ENCODE measurements at regions of chr12 and their contacts with region 1.

Region 1: DNA sequence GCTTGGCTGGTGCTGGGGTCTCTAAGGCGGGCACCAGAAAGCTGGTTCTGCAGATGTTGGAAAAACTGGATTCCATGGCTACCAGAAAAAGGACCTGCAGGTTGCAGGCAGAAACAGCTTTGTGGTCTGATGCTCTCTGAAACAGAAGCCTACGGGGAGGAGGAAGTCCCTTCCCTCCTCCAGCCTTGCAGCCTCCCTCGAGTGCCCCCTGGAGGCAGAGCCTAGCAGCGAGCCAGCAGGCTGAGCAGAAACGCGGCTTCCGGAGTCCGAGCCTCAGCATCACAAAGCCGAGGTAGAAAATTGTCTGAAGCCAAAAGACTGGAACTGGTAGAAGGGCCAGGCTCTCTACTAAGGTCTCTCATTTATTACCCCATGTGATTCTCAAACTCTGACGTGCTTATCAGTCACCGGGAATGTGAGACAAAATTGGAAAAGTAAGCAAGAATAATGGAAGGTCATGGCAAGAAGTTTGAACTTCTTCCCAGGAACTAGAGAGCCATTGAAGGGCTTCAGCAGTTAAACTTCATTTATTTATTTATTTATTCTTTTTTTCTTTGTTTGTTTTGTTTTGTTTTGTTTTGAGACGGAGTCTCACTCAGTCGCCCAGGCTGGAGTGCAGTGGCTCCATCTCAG is 82.2 kb upstream of the CPSF6 start:
- DNase-seq: peak; percentile 79 to 93 (median 87)
- ATAC-seq: peak; percentile 83
- H3K4me3 ChIP-seq: peak overlapping the region; percentile 17
- H3K4me3 Mint-ChIP-seq: peak overlapping the region; percentile 35
- H3K27ac ChIP-seq: no peak overlapping the region
- H3K27ac Mint-ChIP-seq: peak overlapping the region; percentile 57
- H3K4me1 ChIP-seq: peaks cover 16% of the 10 kb centered on the region
- H3K4me1 Mint-ChIP-seq: peaks cover 31% of the 10 kb centered on the region
- H3K27me3 ChIP-seq: no peaks in the 10 kb centered on the region
- H3K27me3 Mint-ChIP-seq: no peaks in the 10 kb centered on the region
- CTCF ChIP-seq: peak; percentile 87

Region 2: GRCh38 chr12:69239352-69239921 is 82.3 kb after region 1 on chr12 and contains the start of gene CPSF6:
- CTCF ChIA-PET with region 1: interaction called, 10 read pairs
- POLR2A ChIA-PET with region 1: interaction called, 9 read pairs
- intact Hi-C with region 1: no loop called
- DNase-seq: peak; percentile 93 to 99 (median 96)
- ATAC-seq: peak; percentile 85
- H3K4me3 ChIP-seq: peak within 1 kb of the TSS; percentile 87
- H3K4me3 Mint-ChIP-seq: peak within 1 kb of the TSS; percentile 97
- H3K27ac ChIP-seq: peak within 1 kb of the TSS; percentile 85 to 86
- H3K27ac Mint-ChIP-seq: peak within 1 kb of the TSS; percentile 99
- H3K4me1 ChIP-seq: peaks cover 30% of the 10 kb centered on the region
- H3K4me1 Mint-ChIP-seq: peaks cover 59% of the 10 kb centered on the region
- H3K27me3 ChIP-seq: no peaks in the 10 kb centered on the region
- H3K27me3 Mint-ChIP-seq: no peaks in the 10 kb centered on the region
- CTCF ChIP-seq: no peak
- total RNA-seq, gene CPSF6: 80.9 to 86.7 TPM

Region 3: DNA sequence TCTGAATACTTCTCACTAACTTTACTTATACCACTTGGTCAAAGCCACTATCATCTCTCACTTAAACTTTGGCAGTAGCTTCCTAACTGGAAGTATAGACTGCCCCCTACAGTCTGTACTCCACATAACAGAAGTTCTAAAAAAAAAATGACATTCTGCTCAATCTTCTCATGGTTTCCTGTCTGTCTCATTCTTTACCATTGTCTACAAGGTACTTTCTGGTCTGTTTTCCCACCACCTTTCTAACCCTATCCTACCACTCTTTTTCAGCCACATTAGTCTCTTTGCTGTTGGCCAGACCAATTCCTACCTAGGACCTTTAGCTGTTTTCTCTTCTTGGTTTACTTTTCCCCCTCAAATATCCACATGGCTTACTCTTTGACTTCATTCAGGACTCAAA is 96.9 kb after region 1 on chr12:
- CTCF ChIA-PET with region 1: interaction called, 45 read pairs
- POLR2A ChIA-PET with region 1: interaction called, 13 read pairs
- intact Hi-C with region 1: loop called (anchors 1 kb)
- DNase-seq: peak in 3 of 14 experiments; percentile 71 to 84 (median 82)
- ATAC-seq: peak; percentile 91
- H3K4me3 ChIP-seq: no peak overlapping the region
- H3K4me3 Mint-ChIP-seq: no peak overlapping the region
- H3K27ac ChIP-seq: peak overlapping the region in 1 of 2 donors; percentile 8
- H3K27ac Mint-ChIP-seq: peak overlapping the region; percentile 19
- H3K4me1 ChIP-seq: no peaks in the 10 kb centered on the region
- H3K4me1 Mint-ChIP-seq: peaks cover 56% of the 10 kb centered on the region
- H3K27me3 ChIP-seq: no peaks in the 10 kb centered on the region
- H3K27me3 Mint-ChIP-seq: no peaks in the 10 kb centered on the region
- CTCF ChIP-seq: peak; percentile 74

Region 4: GRCh38 chr12:69470189-69471075 is 313.3 kb after region 1 on chr12 and contains the start of gene FRS2:
- CTCF ChIA-PET with region 1: interaction called, 3 read pairs
- POLR2A ChIA-PET with region 1: no interaction called
- intact Hi-C with region 1: loop called in 1 of 2 experiments (anchors 10 kb)
- DNase-seq: peak; percentile 68 to 90 (median 82)
- ATAC-seq: peak; percentile 98
- H3K4me3 ChIP-seq: peak within 1 kb of the TSS; percentile 77
- H3K4me3 Mint-ChIP-seq: peak within 1 kb of the TSS; percentile 100
- H3K27ac ChIP-seq: peak within 1 kb of the TSS; percentile 63 to 72
- H3K27ac Mint-ChIP-seq: peak within 1 kb of the TSS; percentile 92
- H3K4me1 ChIP-seq: peaks cover 12% of the 10 kb centered on the region
- H3K4me1 Mint-ChIP-seq: peaks cover 55% of the 10 kb centered on the region
- H3K27me3 ChIP-seq: no peaks in the 10 kb centered on the region
- H3K27me3 Mint-ChIP-seq: no peaks in the 10 kb centered on the region
- CTCF ChIP-seq: no peak
- total RNA-seq, gene FRS2: 21.7 to 24.9 TPM

Region 5: DNA sequence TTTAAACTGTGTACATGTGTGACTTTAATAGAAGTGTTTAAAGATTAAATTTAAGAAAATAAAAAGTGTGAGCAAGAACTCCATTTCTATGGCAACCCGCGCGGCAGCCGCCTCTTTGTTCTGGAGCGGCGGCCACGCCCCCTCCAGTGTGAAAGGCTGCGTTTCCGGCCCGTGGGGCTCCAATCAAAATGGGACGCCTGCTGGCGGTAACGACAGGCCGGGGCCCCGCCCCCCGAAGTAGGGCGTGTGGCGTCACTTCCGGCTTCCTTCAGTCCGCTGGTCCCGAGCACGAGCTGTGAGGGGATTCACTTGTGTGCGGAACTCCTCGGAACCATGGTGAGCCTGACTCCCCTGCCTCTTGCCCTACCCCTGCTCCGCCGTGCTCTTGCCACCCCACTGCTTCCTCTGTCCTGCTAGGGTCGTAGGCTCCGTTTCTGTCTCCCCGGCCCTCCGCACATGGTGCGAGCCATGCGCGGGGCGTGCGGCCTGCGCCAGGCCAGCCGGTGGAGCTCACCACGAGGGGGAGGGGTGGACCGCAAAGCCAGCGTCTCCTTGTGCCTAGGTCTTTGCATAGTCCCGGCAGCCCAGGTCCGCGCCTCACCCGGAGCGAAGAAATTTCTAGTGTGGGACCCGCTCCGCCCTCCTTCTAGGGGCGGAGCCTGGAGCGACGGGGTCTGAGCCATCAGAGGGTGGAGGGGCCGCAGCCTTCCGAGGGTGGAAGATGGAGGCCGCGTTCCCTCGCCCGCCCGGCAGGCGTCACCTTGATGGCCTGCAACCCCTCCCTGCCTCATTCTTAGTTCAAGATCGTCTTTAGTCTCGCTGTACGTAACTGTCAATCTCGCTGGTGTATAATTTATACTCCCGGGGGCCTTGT is 428.3 kb after region 1 on chr12 and contains the start of gene CCT2:
- CTCF ChIA-PET with region 1: no interaction called
- POLR2A ChIA-PET with region 1: no interaction called
- intact Hi-C with region 1: loop called (anchors 5 kb)
- DNase-seq: peak; percentile 92 to 99 (median 96)
- ATAC-seq: peak; percentile 87
- H3K4me3 ChIP-seq: peak within 1 kb of the TSS; percentile 98
- H3K4me3 Mint-ChIP-seq: peak within 1 kb of the TSS; percentile 99
- H3K27ac ChIP-seq: peak within 1 kb of the TSS; percentile 96 to 97
- H3K27ac Mint-ChIP-seq: peak within 1 kb of the TSS; percentile 98
- H3K4me1 ChIP-seq: peaks cover 12% of the 10 kb centered on the region
- H3K4me1 Mint-ChIP-seq: peaks cover 27% of the 10 kb centered on the region
- H3K27me3 ChIP-seq: no peaks in the 10 kb centered on the region
- H3K27me3 Mint-ChIP-seq: no peaks in the 10 kb centered on the region
- CTCF ChIP-seq: peak; percentile 28
- total RNA-seq, gene CCT2: 173 to 177 TPM

Region 6: DNA sequence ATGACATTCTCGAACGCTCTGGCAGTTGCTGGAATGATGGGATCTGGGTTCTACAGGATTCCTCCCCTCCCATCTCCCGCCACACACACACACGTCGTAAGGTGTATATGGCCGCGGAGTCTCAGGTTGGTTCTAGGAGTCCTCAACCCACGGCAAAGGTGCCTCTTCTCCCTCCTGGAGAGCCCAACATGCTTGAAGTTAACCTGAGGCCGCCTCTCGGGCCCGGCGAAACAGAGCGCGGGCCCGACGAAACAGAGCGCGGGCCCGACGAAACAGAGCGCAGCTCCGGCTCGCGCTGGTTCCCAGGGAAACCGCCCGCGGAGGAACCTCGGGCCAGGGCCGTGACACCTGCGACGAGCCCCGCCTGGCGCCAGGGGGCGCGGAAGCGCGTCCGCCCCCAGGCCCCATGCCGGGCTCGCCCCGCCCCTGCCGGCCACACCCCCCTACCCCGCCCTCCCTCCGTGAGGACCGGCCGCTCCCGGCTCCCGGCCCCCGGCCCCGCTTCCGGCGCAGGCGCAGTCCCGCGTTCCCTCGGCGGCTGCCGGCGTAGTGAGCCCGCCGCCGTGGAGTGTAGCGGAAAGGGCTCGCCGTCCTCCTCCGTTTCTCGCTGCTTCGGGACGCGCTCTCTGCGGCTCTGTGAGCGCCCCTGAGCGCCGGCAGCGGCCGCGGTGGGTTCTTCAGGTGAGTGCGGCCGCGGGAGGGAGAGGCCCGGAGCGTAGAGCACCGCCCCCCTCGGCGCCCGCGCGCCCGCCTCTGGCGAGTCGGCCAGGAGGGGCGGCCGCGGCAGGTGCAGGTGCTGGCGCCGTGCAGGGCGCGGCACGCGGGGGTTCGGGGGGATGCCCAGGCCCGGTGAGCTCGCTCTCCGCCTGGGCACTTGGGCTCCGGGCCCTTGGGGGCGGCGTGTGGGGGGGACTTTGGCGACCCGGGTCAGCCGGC is 581.5 kb after region 1 on chr12 and contains the start of gene RAB3IP:
- CTCF ChIA-PET with region 1: no interaction called
- POLR2A ChIA-PET with region 1: no interaction called
- intact Hi-C with region 1: loop called in 1 of 2 experiments (anchors 5 kb)
- DNase-seq: peak; percentile 84 to 98 (median 92)
- ATAC-seq: peak; percentile 84
- H3K4me3 ChIP-seq: peak within 1 kb of the TSS; percentile 82
- H3K4me3 Mint-ChIP-seq: peak within 1 kb of the TSS; percentile 86
- H3K27ac ChIP-seq: peak within 1 kb of the TSS; percentile 48 to 68
- H3K27ac Mint-ChIP-seq: peak within 1 kb of the TSS; percentile 80
- H3K4me1 ChIP-seq: peaks cover 11% of the 10 kb centered on the region
- H3K4me1 Mint-ChIP-seq: peaks cover 27% of the 10 kb centered on the region
- H3K27me3 ChIP-seq: no peaks in the 10 kb centered on the region
- H3K27me3 Mint-ChIP-seq: peaks cover 6% of the 10 kb centered on the region
- CTCF ChIP-seq: peak; percentile 75
- total RNA-seq, gene RAB3IP: 15.2 to 19.6 TPM

Region 7: GRCh38 chr12:70243510-70244371 is 1086.6 kb after region 1 on chr12:
- CTCF ChIA-PET with region 1: no interaction called
- POLR2A ChIA-PET with region 1: no interaction called
- intact Hi-C with region 1: no loop called
- DNase-seq: peak; percentile 54 to 89 (median 68)
- ATAC-seq: peak; percentile 58
- H3K4me3 ChIP-seq: peak overlapping the region; percentile 88
- H3K4me3 Mint-ChIP-seq: peak overlapping the region; percentile 99
- H3K27ac ChIP-seq: peak overlapping the region; percentile 96 to 98
- H3K27ac Mint-ChIP-seq: peak overlapping the region; percentile 97
- H3K4me1 ChIP-seq: peaks cover 12% of the 10 kb centered on the region
- H3K4me1 Mint-ChIP-seq: peaks cover 84% of the 10 kb centered on the region
- H3K27me3 ChIP-seq: no peaks in the 10 kb centered on the region
- H3K27me3 Mint-ChIP-seq: no peaks in the 10 kb centered on the region
- CTCF ChIP-seq: no peak

Region 8: DNA sequence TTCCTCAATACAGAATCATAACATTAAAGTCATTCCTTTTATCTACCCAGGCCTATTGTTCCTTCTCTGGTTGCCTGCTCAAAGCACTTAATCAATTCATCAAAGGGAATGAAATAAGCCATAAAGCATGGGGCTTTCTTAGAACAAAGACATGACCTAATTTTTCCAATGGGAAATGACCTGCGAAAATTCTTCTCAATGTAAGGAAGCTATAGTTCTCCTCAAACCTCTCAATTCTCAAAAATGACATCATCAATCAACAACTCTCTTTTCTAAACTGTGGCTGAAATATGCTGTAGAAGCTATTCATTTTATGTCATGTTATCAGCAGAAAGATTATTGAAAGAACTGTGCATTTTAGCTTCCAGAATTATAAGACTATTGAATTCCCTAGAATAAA is 1879.4 kb after region 1 on chr12:
- CTCF ChIA-PET with region 1: no interaction called
- POLR2A ChIA-PET with region 1: no interaction called
- intact Hi-C with region 1: no loop called
- DNase-seq: no peak
- ATAC-seq: no peak
- H3K4me3 ChIP-seq: no peak overlapping the region
- H3K4me3 Mint-ChIP-seq: no peak overlapping the region
- H3K27ac ChIP-seq: no peak overlapping the region
- H3K27ac Mint-ChIP-seq: no peak overlapping the region
- H3K4me1 ChIP-seq: no peaks in the 10 kb centered on the region
- H3K4me1 Mint-ChIP-seq: no peaks in the 10 kb centered on the region
- H3K27me3 ChIP-seq: no peaks in the 10 kb centered on the region
- H3K27me3 Mint-ChIP-seq: no peaks in the 10 kb centered on the region
- CTCF ChIP-seq: no peak

Measured in CD4-positive, alpha-beta T cell (primary cell).